Right ventricle myocardium superior (tissue), 1 donor: ENCODE measurements at regions of chr10 and their contacts with region 1.

Region 1: GRCh38 chr10:112137154-112137987 is 46.2 kb downstream of the GPAM start:
- DNase-seq: peak; percentile 78
- ATAC-seq: peak; percentile 85

Region 2: GRCh38 chr10:111756217-111757061 is 380.9 kb before region 1 on chr10:
- intact Hi-C with region 1: loop called (anchors 5 kb)
- DNase-seq: no peak
- ATAC-seq: peak; percentile 43